ENCODE measurements at regions of chr17 and their contacts with region 1.

Region 1: GRCh38 chr17:41786227-41787020 is at the start of gene JUP:
- DNase-seq: peak; percentile 87
- H3K4me3 Mint-ChIP-seq: peak within 1 kb of the TSS; percentile 68
- H3K27ac Mint-ChIP-seq: no peak within 1 kb of the TSS
- H3K4me1 Mint-ChIP-seq: peaks cover 11% of the 10 kb centered on the region
- H3K27me3 Mint-ChIP-seq: peaks cover 52% of the 10 kb centered on the region
- total RNA-seq, gene JUP: 0.12 and 0.39 TPM in 2 replicates

Region 2: GRCh38 chr17:41655611-41656351 is 130.6 kb before region 1 on chr17:
- intact Hi-C with region 1: no loop called
- DNase-seq: no peak
- H3K4me3 Mint-ChIP-seq: no peak overlapping the region
- H3K27ac Mint-ChIP-seq: no peak overlapping the region
- H3K4me1 Mint-ChIP-seq: no peaks in the 10 kb centered on the region
- H3K27me3 Mint-ChIP-seq: peaks cover 4% of the 10 kb centered on the region

Region 3: DNA sequence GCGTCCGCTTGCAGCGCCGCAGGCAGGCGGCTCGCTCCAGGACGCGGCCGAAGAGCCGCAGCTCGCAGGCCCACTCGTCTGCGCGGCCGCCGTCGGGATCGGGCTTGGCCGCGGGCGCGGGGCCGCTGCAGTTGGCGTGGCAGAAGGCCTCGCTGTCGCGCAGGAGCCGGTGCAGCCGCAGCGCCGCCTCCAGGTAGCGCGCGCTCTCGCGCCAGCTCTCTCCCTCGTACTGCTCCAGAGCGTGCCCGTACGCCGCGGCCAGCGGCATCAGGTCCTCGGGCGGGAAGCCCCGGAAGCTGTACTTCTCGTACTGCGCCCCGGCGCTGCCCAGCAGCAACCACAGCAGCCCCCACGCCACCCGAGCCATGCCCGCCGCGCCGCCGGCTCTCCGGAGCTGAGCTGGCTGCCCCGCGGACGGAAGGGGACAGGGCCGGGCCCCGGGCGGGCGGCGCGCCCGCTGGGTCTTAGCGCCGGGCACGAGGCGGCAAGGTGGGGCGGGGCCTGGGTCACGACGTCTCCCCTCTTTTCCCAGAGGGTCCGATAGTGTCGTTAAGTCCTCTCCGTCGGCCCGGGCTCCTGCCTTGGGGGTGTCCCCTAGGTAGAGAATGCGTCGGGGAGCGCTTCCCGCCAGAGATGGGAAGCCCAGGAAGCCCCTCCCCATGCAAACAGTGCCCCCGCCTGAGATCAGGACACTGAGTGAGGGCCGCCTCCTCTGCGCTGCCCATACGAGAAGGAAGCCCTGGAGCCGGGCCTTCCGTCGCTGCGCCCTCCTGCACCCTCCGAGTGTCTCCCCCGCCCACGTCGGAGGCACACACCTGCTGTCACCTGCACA is 25.3 kb after region 1 on chr17 and contains the start of gene P3H4:
- intact Hi-C with region 1: loop called (anchors 2 kb)
- DNase-seq: peak; percentile 70
- H3K4me3 Mint-ChIP-seq: peak within 1 kb of the TSS; percentile 90
- H3K27ac Mint-ChIP-seq: peak within 1 kb of the TSS; percentile 86
- H3K4me1 Mint-ChIP-seq: peaks cover 14% of the 10 kb centered on the region
- H3K27me3 Mint-ChIP-seq: peaks cover 30% of the 10 kb centered on the region
- total RNA-seq, gene P3H4: 4.1 and 5.0 TPM in 2 replicates